Testis (tissue), 5 donors: ENCODE measurements at regions of chr3 and their contacts with region 1.

Region 1: GRCh38 chr3:38521391-38521987 is 25.3 kb downstream of the EXOG start:
- DNase-seq: peak; percentile 85
- H3K4me3 ChIP-seq: no peak overlapping the region
- H3K27ac ChIP-seq: no peak overlapping the region
- H3K4me1 ChIP-seq: no peaks in the 10 kb centered on the region
- H3K27me3 ChIP-seq: no peaks in the 10 kb centered on the region
- CTCF ChIP-seq: peak; percentile 78 to 96 (median 90)
- POLR2A ChIP-seq: no peak

Region 2: GRCh38 chr3:38651154-38651789 is 129.8 kb after region 1 on chr3:
- intact Hi-C with region 1: loop called (anchors 10 kb)
- DNase-seq: peak; percentile 81
- H3K4me3 ChIP-seq: no peak overlapping the region
- H3K27ac ChIP-seq: no peak overlapping the region
- H3K4me1 ChIP-seq: peaks cover 3% of the 10 kb centered on the region
- H3K27me3 ChIP-seq: no peaks in the 10 kb centered on the region
- CTCF ChIP-seq: peak; percentile 65 to 94 (median 85)
- POLR2A ChIP-seq: no peak